ENCODE measurements at regions of chr2 and their contacts with region 1.

Region 1: DNA sequence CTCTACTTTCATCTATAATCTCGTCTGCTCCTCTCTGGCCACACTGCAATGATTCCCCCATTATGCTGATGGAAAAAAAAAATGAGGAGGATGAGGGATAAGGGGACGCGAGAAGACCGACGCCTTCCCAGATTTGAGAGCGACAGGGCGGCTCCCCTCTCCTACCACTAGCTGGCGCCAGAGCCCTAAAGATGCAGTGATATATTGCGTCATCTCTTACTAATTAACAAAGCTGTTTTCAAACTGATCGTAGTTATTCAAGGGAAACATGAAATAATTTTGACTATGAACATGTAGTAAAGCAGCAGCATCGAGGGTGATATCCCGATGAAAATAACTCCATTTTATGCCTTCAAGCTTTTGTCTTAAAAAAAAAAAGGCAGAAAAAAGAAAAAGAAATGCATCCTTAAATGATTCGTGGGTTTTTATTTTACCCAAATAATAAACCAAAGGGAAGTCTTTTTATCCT is 48.0 kb upstream of the HNRNPA3 start:
- DNase-seq: peak; percentile 82
- ATAC-seq: peak; percentile 52
- H3K4me3 ChIP-seq: peak overlapping the region; percentile 29 to 52 (median 52); a peak in 5 of 6 replicates
- H3K27ac ChIP-seq: peak overlapping the region; percentile 81
- H3K4me1 ChIP-seq: peaks cover 65% of the 10 kb centered on the region
- H3K27me3 ChIP-seq: peaks cover 0 to 4% of the 10 kb centered on the region in 2 experiments; a peak in 1 of 5 replicates
- CTCF ChIP-seq: peak; percentile 99
- EP300 ChIP-seq: peak; percentile 54 to 55; a peak in 3 of 4 replicates
- POLR2A ChIP-seq: no peak
- RAD21 ChIP-seq: peak; percentile 98

Region 2: GRCh38 chr2:177195194-177195593 is 30.6 kb after region 1 on chr2:
- CTCF ChIA-PET with region 1: interaction called, 16 read pairs
- POLR2A ChIA-PET with region 1: interaction called, 6 read pairs
- in situ Hi-C with region 1: no loop called
- intact Hi-C with region 1: no loop called
- DNase-seq: no peak
- ATAC-seq: peak; percentile 91
- H3K4me3 ChIP-seq: no peak overlapping the region
- H3K27ac ChIP-seq: no peak overlapping the region
- H3K4me1 ChIP-seq: peaks cover 3% of the 10 kb centered on the region
- H3K27me3 ChIP-seq: no peaks in the 10 kb centered on the region
- CTCF ChIP-seq: peak; percentile 45
- EP300 ChIP-seq: no peak
- POLR2A ChIP-seq: no peak
- RAD21 ChIP-seq: no peak

Region 3: DNA sequence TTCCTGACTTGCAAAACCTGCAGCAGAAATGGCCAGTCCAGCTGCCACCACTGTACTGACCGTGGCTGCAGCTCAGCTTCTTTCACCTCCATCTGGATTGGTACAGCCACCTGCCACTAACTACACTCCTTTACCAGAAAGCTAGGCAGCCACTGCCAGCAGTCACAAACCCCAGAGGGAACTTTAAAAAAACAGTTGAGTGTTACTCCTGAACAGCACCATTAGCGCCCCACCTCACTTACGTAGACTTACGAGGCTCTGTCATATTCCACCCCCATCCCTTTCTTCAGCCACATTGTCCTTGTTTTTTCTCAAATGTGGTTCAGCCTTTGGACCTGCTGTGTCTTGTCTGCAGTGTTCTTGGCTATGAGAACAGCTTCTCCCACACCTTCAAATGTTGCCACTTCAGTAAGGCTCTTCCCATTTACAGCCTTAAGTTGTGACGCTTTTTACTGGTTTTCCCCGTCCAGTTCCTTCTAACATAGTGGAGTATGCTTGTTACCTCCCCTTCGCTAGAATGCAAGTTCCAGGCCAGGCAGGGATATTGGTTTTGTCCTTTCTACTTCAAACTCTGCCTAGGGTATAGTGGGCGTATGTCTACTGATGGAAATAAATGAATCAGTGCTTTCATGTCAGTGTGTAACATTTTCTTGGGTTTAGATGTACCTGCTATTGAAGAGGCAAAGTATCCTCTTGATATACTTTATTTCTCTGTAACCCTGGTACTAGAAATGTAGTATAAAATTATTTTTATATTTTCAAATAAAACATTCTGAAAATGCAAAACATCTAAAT is 65.0 kb after region 1 on chr2:
- CTCF ChIA-PET with region 1: no interaction called
- POLR2A ChIA-PET with region 1: interaction called, 17 read pairs
- in situ Hi-C with region 1: no loop called
- intact Hi-C with region 1: no loop called
- DNase-seq: no peak
- ATAC-seq: peak; percentile 12
- H3K4me3 ChIP-seq: no peak overlapping the region
- H3K27ac ChIP-seq: no peak overlapping the region
- H3K4me1 ChIP-seq: peaks cover 29% of the 10 kb centered on the region
- H3K27me3 ChIP-seq: no peaks in the 10 kb centered on the region
- CTCF ChIP-seq: no peak
- EP300 ChIP-seq: no peak
- POLR2A ChIP-seq: peak in 1 of 2 experiments; percentile 66; a peak in 2 of 4 replicates
- RAD21 ChIP-seq: no peak

Region 4: DNA sequence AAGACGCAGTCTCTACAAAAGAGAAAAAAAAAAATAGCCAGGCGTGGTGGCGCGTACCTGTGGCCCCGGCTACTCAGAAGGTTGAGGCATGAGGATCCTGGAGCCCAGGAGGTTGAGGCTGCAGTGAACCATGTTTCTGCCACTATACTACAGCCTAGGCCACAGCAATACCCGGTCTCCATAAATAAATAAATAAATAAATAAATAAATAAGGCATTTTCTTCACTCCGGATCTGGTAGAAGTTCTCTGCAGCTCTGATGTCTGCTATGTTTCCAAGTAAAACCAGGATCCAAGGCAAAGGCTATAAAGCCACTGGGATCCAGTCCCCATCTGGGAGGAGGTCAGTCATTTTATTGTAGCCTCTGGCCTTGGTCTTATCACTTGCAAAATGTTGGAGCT is 84.4 kb after region 1 on chr2:
- CTCF ChIA-PET with region 1: no interaction called
- POLR2A ChIA-PET with region 1: no interaction called
- in situ Hi-C with region 1: no loop called
- intact Hi-C with region 1: no loop called
- DNase-seq: no peak
- ATAC-seq: no peak
- H3K4me3 ChIP-seq: no peak overlapping the region
- H3K27ac ChIP-seq: peak overlapping the region; percentile 33
- H3K4me1 ChIP-seq: peaks cover 94% of the 10 kb centered on the region
- H3K27me3 ChIP-seq: no peaks in the 10 kb centered on the region
- CTCF ChIP-seq: no peak
- EP300 ChIP-seq: no peak
- POLR2A ChIP-seq: no peak
- RAD21 ChIP-seq: no peak

Region 5: DNA sequence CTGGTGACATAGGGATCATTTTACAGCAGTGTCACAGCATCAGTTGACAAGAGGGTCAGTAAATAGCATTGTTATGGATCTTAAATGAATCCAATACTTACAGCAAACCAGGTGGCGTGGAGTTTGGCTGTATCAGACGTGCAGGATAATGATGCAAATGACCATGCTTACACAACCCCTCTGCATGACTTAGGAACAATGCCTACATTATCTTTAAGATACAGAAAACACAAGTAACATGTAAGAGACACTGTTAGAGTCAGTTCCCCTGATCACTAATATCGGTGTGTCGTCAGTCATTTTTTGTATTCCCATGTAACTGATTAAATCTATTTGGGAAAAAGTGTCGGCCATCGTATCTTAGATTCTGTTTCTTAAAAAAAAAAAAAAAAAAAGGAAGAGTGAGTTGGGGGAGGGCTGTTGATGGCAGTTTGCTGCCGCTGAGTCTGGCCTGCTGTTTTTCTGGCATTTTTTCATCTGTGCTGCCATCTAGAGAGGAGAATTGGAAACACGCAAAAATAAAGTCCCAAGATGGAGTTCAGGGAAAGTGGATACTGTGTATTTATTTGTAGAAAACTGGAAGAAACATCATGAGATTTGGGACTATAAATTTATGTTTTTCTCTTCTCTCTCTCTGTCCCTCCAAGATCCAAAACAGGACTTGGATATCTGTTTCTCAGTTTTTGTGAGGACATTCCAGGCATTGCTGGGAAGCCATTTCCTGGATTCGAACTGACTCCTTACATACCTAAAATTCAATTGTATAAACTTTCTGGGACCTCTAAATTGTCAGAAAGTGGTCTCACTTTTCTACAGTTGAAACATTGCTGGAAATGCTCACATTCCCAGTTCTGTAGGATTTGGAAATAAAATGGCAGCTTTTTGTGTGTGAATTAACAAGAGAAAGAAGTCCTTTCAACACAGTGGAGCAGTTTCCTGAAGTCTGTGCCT is 167.7 kb after region 1 on chr2:
- CTCF ChIA-PET with region 1: interaction called, 47 read pairs
- POLR2A ChIA-PET with region 1: interaction called, 6 read pairs
- in situ Hi-C with region 1: loop called (anchors 5 kb)
- intact Hi-C with region 1: loop called (anchors 1 kb)
- DNase-seq: peak; percentile 74
- ATAC-seq: peak; percentile 91
- H3K4me3 ChIP-seq: no peak overlapping the region
- H3K27ac ChIP-seq: peak overlapping the region; percentile 41
- H3K4me1 ChIP-seq: peaks cover 32% of the 10 kb centered on the region
- H3K27me3 ChIP-seq: no peaks in the 10 kb centered on the region
- CTCF ChIP-seq: peak; percentile 87
- EP300 ChIP-seq: peak in 1 of 2 experiments; percentile 11; a peak in 1 of 4 replicates
- POLR2A ChIP-seq: no peak
- RAD21 ChIP-seq: peak; percentile 82

Region 6: DNA sequence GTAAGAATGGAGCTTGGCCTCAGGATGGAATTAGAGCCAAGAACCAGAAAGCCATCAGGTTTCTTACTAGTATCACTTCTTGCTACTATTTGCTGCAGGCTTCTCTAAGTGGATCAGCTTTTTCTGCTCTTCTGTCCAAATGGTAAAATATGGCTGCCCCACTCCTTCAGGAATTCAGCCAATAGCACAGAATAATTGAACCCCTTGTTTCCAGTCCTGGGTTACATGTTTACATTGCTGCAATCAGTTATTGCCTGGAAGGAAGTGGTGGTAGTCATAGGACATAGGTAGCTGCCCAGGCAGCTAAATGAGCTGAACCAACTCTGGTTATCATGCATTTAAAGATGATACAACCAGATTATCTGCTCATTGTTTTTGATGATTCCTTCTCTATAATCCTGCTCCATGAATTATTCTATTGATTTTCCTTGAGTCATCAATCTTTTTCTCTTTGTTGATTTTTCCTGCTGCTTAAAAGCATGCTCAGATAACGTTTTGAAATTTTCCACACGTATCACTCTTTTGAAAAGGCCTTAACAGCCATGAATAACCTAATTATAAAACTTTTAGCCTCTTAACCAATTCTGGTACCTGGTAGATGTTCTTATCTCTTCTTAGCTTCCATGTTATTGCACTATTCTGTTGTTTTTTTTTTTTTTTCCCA is 240.5 kb after region 1 on chr2:
- CTCF ChIA-PET with region 1: no interaction called
- POLR2A ChIA-PET with region 1: no interaction called
- in situ Hi-C with region 1: no loop called
- intact Hi-C with region 1: no loop called
- DNase-seq: peak; percentile 82
- ATAC-seq: peak; percentile 92
- H3K4me3 ChIP-seq: no peak overlapping the region
- H3K27ac ChIP-seq: peak overlapping the region; percentile 13
- H3K4me1 ChIP-seq: peaks cover 98% of the 10 kb centered on the region
- H3K27me3 ChIP-seq: no peaks in the 10 kb centered on the region
- CTCF ChIP-seq: no peak
- EP300 ChIP-seq: peak in 1 of 2 experiments; percentile 37; a peak in 1 of 4 replicates
- POLR2A ChIP-seq: no peak
- RAD21 ChIP-seq: no peak

Region 7: GRCh38 chr2:177419274-177419673 is 254.7 kb after region 1 on chr2:
- CTCF ChIA-PET with region 1: no interaction called
- POLR2A ChIA-PET with region 1: no interaction called
- in situ Hi-C with region 1: loop called (anchors 5 kb)
- intact Hi-C with region 1: loop called (anchors 2 kb)
- DNase-seq: no peak
- ATAC-seq: no peak
- H3K4me3 ChIP-seq: no peak overlapping the region
- H3K27ac ChIP-seq: no peak overlapping the region
- H3K4me1 ChIP-seq: peaks cover 58% of the 10 kb centered on the region
- H3K27me3 ChIP-seq: no peaks in the 10 kb centered on the region
- CTCF ChIP-seq: no peak
- EP300 ChIP-seq: no peak
- POLR2A ChIP-seq: no peak
- RAD21 ChIP-seq: no peak

Region 8: DNA sequence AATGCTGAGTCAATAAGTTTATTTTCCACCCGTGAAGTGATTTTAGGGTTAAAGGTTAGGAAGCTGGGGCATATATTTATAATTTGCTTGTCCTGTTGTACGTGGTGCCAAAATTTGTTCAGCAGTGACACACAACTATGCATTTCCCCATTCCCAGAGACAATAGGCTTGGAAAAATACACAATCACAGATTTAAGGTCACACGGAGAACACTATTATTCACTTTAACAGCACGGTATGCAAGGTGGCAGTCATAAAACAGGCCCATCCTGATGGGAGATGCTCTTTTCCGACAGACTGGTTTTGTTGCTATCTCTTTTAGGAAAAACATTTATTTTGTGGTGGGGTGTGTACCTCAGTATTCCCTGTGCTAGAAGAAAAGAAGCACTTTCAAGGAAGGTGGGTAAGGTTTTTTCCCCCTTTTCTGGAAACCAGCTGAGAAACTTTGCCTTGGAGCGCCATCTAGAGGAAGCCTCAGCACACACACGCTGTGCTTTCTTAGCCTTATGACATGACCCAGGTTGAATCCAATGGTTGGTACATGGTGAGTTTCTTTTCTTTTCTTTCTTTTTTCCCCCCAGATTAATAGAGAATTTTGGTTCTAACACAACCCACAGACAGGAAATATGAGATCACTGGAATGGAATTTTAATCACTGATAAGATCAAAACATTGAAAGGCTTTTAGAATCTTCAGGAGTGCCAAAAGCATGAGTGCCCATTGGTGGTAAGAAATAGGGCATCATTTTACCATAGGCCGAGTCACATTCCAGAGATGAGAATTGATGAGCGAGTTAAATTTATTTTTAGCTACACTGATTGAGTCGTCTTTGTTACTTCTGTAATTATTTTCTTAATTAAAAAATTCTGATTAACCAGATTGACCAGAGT is 560.0 kb after region 1 on chr2:
- CTCF ChIA-PET with region 1: no interaction called
- POLR2A ChIA-PET with region 1: no interaction called
- in situ Hi-C with region 1: loop called (anchors 10 kb)
- intact Hi-C with region 1: loop called (anchors 5 kb)
- DNase-seq: peak; percentile 47
- ATAC-seq: peak; percentile 94
- H3K4me3 ChIP-seq: no peak overlapping the region
- H3K27ac ChIP-seq: no peak overlapping the region
- H3K4me1 ChIP-seq: peaks cover 11% of the 10 kb centered on the region
- H3K27me3 ChIP-seq: no peaks in the 10 kb centered on the region
- CTCF ChIP-seq: peak; percentile 94
- EP300 ChIP-seq: no peak
- POLR2A ChIP-seq: no peak
- RAD21 ChIP-seq: peak; percentile 82

Measured in HepG2 (cell line).